ENCODE measurements at regions of chr20 and their contacts with region 1.

Region 1: GRCh38 chr20:3970016-3970415 is 45.3 kb downstream of the RNF24 start:
- DNase-seq: no peak
- ATAC-seq: peak; percentile 78
- H3K4me3 Mint-ChIP-seq: no peak overlapping the region
- H3K27ac Mint-ChIP-seq: peak overlapping the region; percentile 10; the same call in 1 of the 2 replicates
- H3K4me1 Mint-ChIP-seq: peaks cover 16% of the 10 kb centered on the region
- H3K27me3 Mint-ChIP-seq: no peaks in the 10 kb centered on the region
- CTCF ChIP-seq: no peak

Region 2: GRCh38 chr20:3922223-3922982 is 47.6 kb before region 1 on chr20:
- CTCF ChIA-PET with region 1: no interaction called
- POLR2A ChIA-PET with region 1: interaction called, 10 read pairs
- DNase-seq: no peak
- ATAC-seq: no peak
- H3K4me3 Mint-ChIP-seq: no peak overlapping the region
- H3K27ac Mint-ChIP-seq: peak overlapping the region; percentile 82
- H3K4me1 Mint-ChIP-seq: peaks cover 24% of the 10 kb centered on the region
- H3K27me3 Mint-ChIP-seq: no peaks in the 10 kb centered on the region
- CTCF ChIP-seq: no peak

Region 3: GRCh38 chr20:3995067-3995748 is 25.2 kb after region 1 on chr20:
- CTCF ChIA-PET with region 1: no interaction called
- POLR2A ChIA-PET with region 1: interaction called, 10 read pairs
- DNase-seq: no peak
- ATAC-seq: peak; percentile 83
- H3K4me3 Mint-ChIP-seq: no peak overlapping the region
- H3K27ac Mint-ChIP-seq: no peak overlapping the region
- H3K4me1 Mint-ChIP-seq: no peaks in the 10 kb centered on the region
- H3K27me3 Mint-ChIP-seq: no peaks in the 10 kb centered on the region
- CTCF ChIP-seq: no peak

Measured in WTC11 (cell line).